ENCODE measurements at regions of chr1 and their contacts with region 1.

Region 1: GRCh38 chr1:45011837-45012638 is at the start of gene UROD:
- H3K4me3 ChIP-seq: peak within 1 kb of the TSS; percentile 84
- H3K27ac ChIP-seq: peak within 1 kb of the TSS; percentile 42; the same call in 1 of the 2 replicates
- H3K4me1 ChIP-seq: no peaks in the 10 kb centered on the region
- CTCF ChIP-seq: no peak

Region 2: DNA sequence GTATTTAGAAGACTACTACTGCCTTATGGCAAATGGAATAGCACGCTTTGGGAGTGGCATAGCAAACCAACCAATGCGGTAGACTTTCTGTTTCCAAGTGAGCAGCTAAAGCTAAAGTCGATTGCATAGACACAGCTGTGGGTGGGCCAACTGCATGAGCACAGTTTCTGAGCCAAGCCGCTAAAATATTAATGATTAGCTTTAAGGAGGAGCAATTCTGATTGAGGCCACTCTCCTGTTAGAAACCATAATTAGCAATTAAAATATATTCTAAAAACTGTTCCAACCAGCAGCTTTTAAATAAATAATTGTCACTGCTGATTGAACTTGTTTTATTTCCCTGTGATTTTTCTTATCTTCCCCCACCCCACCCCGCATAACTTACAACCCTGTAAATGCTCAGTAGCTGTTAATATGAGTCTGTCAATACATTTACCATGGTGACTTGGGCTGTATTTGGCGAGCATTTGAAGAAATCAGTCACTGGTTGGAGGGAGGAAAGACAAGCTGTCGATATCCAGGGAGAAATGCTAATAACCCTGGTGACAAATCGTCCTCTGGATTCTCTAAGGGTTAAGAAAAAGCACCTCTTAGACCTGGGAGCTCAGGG is 574.8 kb before region 1 on chr1:
- CTCF ChIA-PET with region 1: no interaction called
- POLR2A ChIA-PET with region 1: no interaction called
- H3K4me3 ChIP-seq: no peak overlapping the region
- H3K27ac ChIP-seq: no peak overlapping the region
- H3K4me1 ChIP-seq: peaks cover 8% of the 10 kb centered on the region
- CTCF ChIP-seq: no peak

Region 3: DNA sequence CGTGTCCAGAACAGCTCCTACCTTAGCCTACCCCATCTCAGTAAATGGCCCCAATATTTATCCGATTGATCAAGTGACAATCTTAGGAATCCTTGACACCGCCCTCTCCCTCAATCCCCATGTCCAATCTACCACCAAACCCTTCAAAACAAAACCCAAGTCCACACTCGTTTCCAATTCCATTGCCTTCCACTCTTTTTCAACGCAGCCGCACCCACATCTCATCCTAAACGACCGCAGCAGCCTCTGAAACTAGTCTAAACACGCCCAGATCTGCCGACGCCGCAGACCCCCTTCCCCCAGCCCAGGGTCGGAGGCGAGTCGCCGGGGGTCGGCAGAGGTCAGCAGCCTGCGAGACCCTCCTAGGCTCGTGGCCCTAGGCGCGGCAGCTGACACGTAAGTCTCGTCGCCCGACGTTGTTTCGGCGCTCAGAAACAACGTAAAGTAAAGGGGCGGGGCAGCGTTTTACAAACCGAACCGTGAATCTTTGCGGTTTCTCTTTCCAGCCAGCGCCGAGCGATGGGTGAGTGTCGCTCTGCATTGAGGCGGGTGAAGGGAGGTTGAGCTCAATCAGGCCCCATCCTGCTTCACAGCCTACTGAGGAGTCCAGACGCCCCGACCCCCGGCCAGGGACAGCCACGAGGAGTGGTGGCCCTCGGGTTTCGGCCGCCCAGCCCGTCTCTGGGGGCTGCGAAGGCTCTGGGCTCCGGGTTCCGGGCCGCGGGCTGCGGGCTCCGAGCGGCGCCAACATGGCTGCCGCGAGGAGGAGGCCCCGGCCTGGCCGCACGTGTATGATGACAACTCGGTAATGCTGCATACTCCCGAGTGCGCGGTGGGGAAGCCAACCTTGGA is 236.7 kb before region 1 on chr1 and contains the start of gene RPS8:
- CTCF ChIA-PET with region 1: interaction called, 3 read pairs
- POLR2A ChIA-PET with region 1: interaction called, 17 read pairs
- H3K4me3 ChIP-seq: peak within 1 kb of the TSS; percentile 63
- H3K27ac ChIP-seq: peak within 1 kb of the TSS; percentile 99
- H3K4me1 ChIP-seq: no peaks in the 10 kb centered on the region
- CTCF ChIP-seq: no peak

Region 4: DNA sequence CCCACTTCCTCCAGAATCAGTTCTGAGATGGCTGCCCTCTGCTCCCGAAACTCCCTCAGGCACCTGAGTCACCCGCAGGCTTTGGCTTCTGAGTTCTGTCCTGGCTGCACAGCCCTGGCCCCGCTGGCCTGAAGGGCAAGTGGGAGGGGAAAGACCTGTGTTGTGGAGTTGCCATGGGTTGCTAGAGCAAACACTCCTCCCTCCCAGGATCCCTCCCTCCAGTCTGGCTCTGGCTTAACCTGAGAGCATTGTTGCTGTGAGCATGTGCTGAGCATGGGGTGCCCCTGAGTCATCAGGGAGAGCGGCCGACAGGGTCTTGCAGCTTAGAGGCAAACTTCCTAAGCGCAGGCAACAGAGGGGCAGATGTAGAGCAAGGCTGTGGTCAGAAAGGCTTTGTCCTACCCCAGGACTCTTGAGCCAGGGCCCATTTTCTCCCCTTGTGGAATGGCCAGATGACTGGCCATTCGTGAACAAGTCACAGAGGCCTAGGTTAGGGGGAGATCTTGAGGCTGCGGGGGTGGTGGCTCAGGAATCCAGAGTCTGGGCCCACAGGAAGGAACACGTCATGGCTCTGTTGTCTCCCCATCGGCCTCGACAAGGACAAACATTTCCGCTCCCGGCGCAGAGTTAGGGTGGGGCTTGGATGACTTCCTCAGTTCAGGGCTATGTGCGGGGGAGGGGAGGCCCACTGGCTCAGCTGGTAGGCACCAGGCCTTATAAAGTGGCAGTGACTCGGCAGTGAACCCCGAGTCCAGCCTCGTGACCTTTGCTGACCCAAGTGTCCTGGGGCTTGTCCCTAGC is 204.6 kb before region 1 on chr1 and contains the start of gene DYNLT4:
- CTCF ChIA-PET with region 1: interaction called, 4 read pairs
- POLR2A ChIA-PET with region 1: interaction called, 12 read pairs
- H3K4me3 ChIP-seq: peak within 1 kb of the TSS; percentile 1
- H3K27ac ChIP-seq: peak within 1 kb of the TSS; percentile 72
- H3K4me1 ChIP-seq: peaks cover 19% of the 10 kb centered on the region
- CTCF ChIP-seq: no peak

Region 5: DNA sequence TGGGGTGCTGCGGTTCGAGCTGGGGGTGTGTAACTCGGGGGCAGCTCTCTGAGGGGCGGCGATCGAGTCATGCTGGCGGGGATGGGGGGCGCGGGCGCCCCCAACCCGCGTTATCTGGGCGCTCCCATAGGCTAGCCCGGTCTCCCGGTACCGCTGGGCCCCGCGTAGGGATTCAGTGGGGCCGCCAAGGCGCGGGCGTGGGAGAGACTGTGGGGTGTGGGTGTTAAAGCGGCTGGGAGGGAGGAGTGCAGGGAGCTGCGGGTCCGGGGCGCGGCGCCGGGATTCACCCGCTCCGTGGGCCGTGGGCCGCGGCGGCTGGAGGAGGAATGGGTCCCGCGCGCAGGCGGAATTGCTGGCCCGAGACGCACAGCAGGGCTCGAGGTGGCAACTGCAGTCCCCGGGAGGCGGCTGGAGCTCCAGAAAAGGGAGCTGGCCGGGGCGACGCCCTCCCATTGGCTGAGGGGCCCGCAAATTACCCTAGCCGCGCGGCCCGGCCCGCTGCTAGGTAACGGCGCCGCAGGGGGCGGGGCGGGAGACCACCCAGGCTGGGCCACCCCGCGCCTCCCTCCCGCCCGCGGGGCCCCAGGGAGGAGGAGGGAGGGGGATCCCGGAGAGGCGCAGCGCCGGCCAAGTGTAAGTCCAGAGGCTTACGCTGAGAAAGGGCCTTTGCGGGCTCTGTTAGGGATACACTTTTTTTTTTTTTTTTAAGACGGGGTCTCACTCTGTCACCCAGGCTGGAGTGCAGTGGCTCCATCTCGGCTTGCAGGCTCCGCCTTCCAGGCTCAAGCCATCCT is 169.0 kb before region 1 on chr1 and contains the start of gene PTCH2:
- CTCF ChIA-PET with region 1: interaction called, 6 read pairs
- POLR2A ChIA-PET with region 1: interaction called, 27 read pairs
- H3K4me3 ChIP-seq: peak within 1 kb of the TSS; percentile 59
- H3K27ac ChIP-seq: peak within 1 kb of the TSS; percentile 45; the same call in 1 of the 2 replicates
- H3K4me1 ChIP-seq: no peaks in the 10 kb centered on the region
- CTCF ChIP-seq: no peak

Region 6: DNA sequence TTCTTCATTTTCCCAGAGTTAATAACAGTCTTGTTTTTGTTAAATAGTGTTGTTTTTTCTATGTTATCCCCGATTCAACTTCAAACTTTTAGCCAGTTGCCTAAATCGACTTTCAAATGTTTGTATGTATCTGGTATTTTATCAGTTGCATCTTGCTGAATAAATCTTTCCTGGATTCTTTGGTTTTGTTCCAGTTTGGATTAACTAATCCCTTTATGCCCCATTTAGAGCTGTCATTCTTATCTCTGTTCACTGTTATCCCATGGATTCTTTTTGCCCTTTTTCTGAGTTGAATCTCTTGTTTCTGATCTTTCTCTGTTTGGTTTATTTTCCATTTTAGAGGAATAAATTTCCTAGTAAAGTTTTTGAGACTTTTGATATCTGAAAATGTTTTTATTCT is 137.9 kb before region 1 on chr1:
- CTCF ChIA-PET with region 1: no interaction called
- POLR2A ChIA-PET with region 1: no interaction called
- H3K4me3 ChIP-seq: no peak overlapping the region
- H3K27ac ChIP-seq: no peak overlapping the region
- H3K4me1 ChIP-seq: peaks cover 2% of the 10 kb centered on the region; the same call in 1 of the 2 replicates
- CTCF ChIP-seq: no peak

Region 7: DNA sequence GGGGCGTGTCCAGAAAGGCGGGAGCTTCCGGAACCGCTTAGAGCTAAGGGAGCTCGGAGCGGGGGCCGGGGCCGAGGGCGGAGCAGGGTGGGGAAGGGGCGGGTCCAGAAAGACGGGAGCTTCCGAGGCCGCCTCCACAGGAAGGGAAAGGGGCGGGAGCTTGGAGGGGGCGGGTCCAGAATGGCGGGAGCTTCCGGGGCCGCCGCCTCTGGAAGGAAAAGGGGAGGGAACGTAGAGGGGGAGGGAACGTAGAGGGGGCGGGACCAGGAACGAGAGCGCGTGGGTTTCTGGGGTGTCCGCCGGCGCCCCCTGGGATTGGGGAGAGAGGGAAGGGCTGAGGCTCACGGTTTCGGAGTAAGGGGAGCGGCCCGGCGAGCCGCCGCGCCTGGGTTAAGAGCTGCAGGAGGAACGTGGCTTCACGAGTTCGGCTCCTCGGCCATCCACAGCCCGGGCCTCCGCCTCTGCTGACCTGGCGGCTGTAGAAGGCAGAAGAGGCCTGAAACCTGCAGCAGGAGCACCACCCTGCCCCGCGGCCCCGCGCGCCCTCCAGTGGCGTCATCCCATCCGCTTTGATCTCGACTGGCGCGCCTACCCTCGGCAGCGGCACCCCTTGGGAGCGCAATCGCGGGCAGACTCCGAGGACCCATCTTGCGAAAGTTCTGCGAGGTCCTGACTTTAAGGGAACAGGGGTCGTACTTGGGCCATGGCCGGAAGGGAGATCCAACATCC is 291.7 kb after region 1 on chr1:
- CTCF ChIA-PET with region 1: interaction called, 304 read pairs
- POLR2A ChIA-PET with region 1: interaction called, 83 read pairs
- H3K4me3 ChIP-seq: peak overlapping the region; percentile 78
- H3K27ac ChIP-seq: peak overlapping the region; percentile 70
- H3K4me1 ChIP-seq: peaks cover 5% of the 10 kb centered on the region; the same call in 1 of the 2 replicates
- CTCF ChIP-seq: peak; percentile 100

Region 8: GRCh38 chr1:45521398-45522323 is 509.6 kb after region 1 on chr1 and contains the start of gene PRDX1:
- CTCF ChIA-PET with region 1: no interaction called
- POLR2A ChIA-PET with region 1: interaction called, 11 read pairs
- H3K4me3 ChIP-seq: peak within 1 kb of the TSS; percentile 96
- H3K27ac ChIP-seq: peak within 1 kb of the TSS; percentile 63
- H3K4me1 ChIP-seq: 0 out of 2 replicates have a peak, but pooled peaks cover 3% of the 10 kb centered on the region
- CTCF ChIP-seq: peak; percentile 75